ENCODE measurements at regions of chr2 and their contacts with region 1.

Region 1: GRCh38 chr2:237744613-237745249 is 53.8 kb upstream of the RBM44 start:
- DNase-seq: peak; percentile 58 to 87 (median 78)
- ATAC-seq: peak; percentile 75
- H3K4me3 ChIP-seq: no peak overlapping the region
- H3K4me3 Mint-ChIP-seq: peak overlapping the region; percentile 43
- H3K27ac ChIP-seq: no peak overlapping the region
- H3K27ac Mint-ChIP-seq: peak overlapping the region; percentile 78
- H3K4me1 ChIP-seq: peaks cover 40% of the 10 kb centered on the region
- H3K4me1 Mint-ChIP-seq: peaks cover 50% of the 10 kb centered on the region
- H3K27me3 ChIP-seq: no peaks in the 10 kb centered on the region
- H3K27me3 Mint-ChIP-seq: no peaks in the 10 kb centered on the region
- CTCF ChIP-seq: peak; percentile 98

Region 2: DNA sequence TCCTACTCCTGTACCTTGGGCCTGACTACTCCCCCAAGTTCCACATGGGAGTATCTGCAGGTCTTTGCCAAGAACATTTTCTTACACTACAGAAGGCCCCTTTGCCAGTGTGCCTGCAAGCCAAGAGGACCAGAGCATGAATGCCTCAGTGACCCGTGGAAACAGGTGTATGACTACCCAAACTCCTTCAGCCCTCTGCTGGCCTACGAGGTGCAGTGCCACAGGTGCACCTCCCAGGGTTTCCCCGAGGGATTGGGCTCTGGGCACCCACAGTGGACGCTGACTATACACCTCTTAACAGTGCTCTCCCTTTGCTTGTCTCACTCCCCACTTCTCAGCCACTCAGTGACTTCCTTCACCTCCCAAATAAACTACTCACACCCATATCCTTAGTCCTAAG is 422.2 kb before region 1 on chr2:
- CTCF ChIA-PET with region 1: no interaction called
- POLR2A ChIA-PET with region 1: no interaction called
- intact Hi-C with region 1: no loop called
- DNase-seq: no peak
- ATAC-seq: no peak
- H3K4me3 ChIP-seq: no peak overlapping the region
- H3K4me3 Mint-ChIP-seq: no peak overlapping the region
- H3K27ac ChIP-seq: no peak overlapping the region
- H3K27ac Mint-ChIP-seq: no peak overlapping the region
- H3K4me1 ChIP-seq: no peaks in the 10 kb centered on the region
- H3K4me1 Mint-ChIP-seq: no peaks in the 10 kb centered on the region
- H3K27me3 ChIP-seq: no peaks in the 10 kb centered on the region
- H3K27me3 Mint-ChIP-seq: peaks cover 3% of the 10 kb centered on the region
- CTCF ChIP-seq: no peak

Region 3: GRCh38 chr2:237512774-237513466 is 231.8 kb before region 1 on chr2:
- CTCF ChIA-PET with region 1: interaction called, 16 read pairs
- POLR2A ChIA-PET with region 1: interaction called, 6 read pairs
- intact Hi-C with region 1: loop called (anchors 1 kb)
- DNase-seq: peak; percentile 66 to 88 (median 74)
- ATAC-seq: peak; percentile 80
- H3K4me3 ChIP-seq: no peak overlapping the region
- H3K4me3 Mint-ChIP-seq: no peak overlapping the region
- H3K27ac ChIP-seq: no peak overlapping the region
- H3K27ac Mint-ChIP-seq: no peak overlapping the region
- H3K4me1 ChIP-seq: peaks cover 7% of the 10 kb centered on the region
- H3K4me1 Mint-ChIP-seq: no peaks in the 10 kb centered on the region
- H3K27me3 ChIP-seq: peaks cover 0 to 4% of the 10 kb centered on the region in 2 experiments
- H3K27me3 Mint-ChIP-seq: peaks cover 1% of the 10 kb centered on the region
- CTCF ChIP-seq: peak; percentile 84

Region 4: DNA sequence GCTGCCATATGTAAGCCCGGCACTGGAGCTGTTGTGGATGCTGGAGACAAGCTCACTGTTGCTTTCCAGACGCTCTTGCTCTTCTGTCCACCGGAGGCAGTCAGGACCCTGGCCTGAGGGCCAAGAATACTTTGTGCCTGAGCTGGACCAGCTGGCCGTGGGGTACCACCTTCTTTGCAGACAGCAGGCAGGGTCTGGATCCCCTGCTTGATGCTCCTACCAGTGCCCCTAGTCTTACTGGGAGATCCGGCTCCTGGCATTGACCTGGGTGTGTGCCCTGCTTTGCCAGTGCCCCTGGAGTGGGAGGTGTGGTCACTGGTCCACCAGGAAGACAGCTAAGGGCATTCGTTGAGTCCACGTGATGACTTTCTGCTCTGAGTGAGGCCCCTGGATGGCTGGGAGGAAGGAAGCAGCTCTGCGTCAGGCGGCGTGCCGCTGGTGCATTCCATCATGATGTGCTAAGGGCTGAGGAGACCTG is 58.0 kb before region 1 on chr2:
- CTCF ChIA-PET with region 1: interaction called, 20 read pairs
- POLR2A ChIA-PET with region 1: no interaction called
- intact Hi-C with region 1: no loop called
- DNase-seq: peak in 2 of 14 experiments; percentile 62 to 73
- ATAC-seq: no peak
- H3K4me3 ChIP-seq: no peak overlapping the region
- H3K4me3 Mint-ChIP-seq: no peak overlapping the region
- H3K27ac ChIP-seq: peak overlapping the region; percentile 89 to 96
- H3K27ac Mint-ChIP-seq: peak overlapping the region; percentile 98
- H3K4me1 ChIP-seq: peaks cover 62% of the 10 kb centered on the region
- H3K4me1 Mint-ChIP-seq: peaks cover 55% of the 10 kb centered on the region
- H3K27me3 ChIP-seq: no peaks in the 10 kb centered on the region
- H3K27me3 Mint-ChIP-seq: no peaks in the 10 kb centered on the region
- CTCF ChIP-seq: no peak

Region 5: GRCh38 chr2:237700512-237701032 is 44.2 kb before region 1 on chr2:
- CTCF ChIA-PET with region 1: interaction called, 15 read pairs
- POLR2A ChIA-PET with region 1: interaction called, 3 read pairs
- intact Hi-C with region 1: loop called (anchors 2 kb)
- DNase-seq: peak in 11 of 14 experiments; percentile 35 to 92 (median 59)
- ATAC-seq: peak; percentile 67
- H3K4me3 ChIP-seq: no peak overlapping the region
- H3K4me3 Mint-ChIP-seq: peak overlapping the region; percentile 83
- H3K27ac ChIP-seq: peak overlapping the region; percentile 57 to 64
- H3K27ac Mint-ChIP-seq: peak overlapping the region; percentile 93
- H3K4me1 ChIP-seq: peaks cover 99% of the 10 kb centered on the region
- H3K4me1 Mint-ChIP-seq: peaks cover 98% of the 10 kb centered on the region
- H3K27me3 ChIP-seq: no peaks in the 10 kb centered on the region
- H3K27me3 Mint-ChIP-seq: no peaks in the 10 kb centered on the region
- CTCF ChIP-seq: no peak

Region 6: DNA sequence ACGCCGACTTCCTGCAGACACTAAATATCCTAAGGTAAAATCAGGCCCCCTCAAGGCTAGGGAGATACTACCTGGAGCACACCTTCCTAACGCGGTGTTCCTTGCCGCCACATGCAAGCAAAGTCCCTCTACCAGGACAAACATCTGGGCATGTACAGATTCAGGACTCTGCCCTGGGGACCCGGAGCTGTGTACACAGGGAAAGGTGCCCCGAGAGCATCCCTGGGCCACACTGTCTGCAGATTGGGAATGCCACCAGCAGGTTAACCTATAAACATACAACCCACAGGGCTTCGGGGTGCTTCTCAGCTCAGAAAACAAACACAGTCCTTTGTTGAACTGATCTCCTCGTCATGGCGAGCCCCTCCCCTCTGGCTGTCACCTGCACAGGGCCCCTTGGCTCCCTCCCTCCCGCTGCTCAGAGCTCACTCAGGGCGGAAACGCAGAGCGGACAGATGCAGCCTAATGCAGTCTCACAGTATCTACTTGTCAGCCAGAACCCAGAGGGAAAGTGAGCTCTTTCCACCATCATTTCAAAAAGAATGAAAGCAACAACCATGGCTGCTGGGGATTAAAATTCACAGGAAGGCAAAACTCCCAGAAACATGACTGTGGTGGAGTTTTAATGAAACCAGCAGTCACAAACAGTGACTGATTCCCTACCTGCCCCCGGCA is 1437.3 kb after region 1 on chr2:
- CTCF ChIA-PET with region 1: no interaction called
- POLR2A ChIA-PET with region 1: no interaction called
- intact Hi-C with region 1: no loop called
- DNase-seq: peak in 1 of 14 experiments; percentile 19
- ATAC-seq: peak; percentile 41
- H3K4me3 ChIP-seq: no peak overlapping the region
- H3K4me3 Mint-ChIP-seq: no peak overlapping the region
- H3K27ac ChIP-seq: no peak overlapping the region
- H3K27ac Mint-ChIP-seq: no peak overlapping the region
- H3K4me1 ChIP-seq: no peaks in the 10 kb centered on the region
- H3K4me1 Mint-ChIP-seq: no peaks in the 10 kb centered on the region
- H3K27me3 ChIP-seq: no peaks in the 10 kb centered on the region
- H3K27me3 Mint-ChIP-seq: no peaks in the 10 kb centered on the region
- CTCF ChIP-seq: no peak